ENCODE measurements at regions of chr17 and their contacts with region 1.

Region 1: DNA sequence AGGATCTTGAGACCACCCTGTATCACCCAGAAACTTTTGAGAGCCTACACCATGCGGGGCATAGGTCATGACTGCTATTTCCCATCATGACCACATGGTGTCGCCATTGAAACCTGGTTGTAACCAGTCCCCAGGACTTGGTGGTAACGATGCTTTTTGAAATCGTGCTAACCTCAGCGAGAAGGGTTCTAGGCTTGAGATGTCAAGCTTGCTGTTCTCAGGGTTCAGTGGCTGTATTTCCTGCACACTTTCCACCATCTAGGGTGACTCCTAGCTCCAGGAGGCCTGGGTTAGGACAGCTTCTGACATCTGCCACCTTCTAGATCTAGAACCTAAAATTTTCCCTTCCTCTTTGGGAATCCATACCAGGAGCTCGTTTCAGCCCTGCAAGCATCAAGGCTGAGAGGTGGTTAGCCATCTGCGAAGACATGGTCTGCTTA is 13.0 kb upstream of the SPNS3 start:
- DNase-seq: peak in 2 of 3 donors; percentile 35 to 62
- ATAC-seq: peak; percentile 88 to 92
- H3K4me3 ChIP-seq: no peak overlapping the region
- H3K27ac ChIP-seq: no peak overlapping the region
- H3K4me1 ChIP-seq: no peaks in the 10 kb centered on the region
- H3K27me3 ChIP-seq: no peaks in the 10 kb centered on the region

Region 2: DNA sequence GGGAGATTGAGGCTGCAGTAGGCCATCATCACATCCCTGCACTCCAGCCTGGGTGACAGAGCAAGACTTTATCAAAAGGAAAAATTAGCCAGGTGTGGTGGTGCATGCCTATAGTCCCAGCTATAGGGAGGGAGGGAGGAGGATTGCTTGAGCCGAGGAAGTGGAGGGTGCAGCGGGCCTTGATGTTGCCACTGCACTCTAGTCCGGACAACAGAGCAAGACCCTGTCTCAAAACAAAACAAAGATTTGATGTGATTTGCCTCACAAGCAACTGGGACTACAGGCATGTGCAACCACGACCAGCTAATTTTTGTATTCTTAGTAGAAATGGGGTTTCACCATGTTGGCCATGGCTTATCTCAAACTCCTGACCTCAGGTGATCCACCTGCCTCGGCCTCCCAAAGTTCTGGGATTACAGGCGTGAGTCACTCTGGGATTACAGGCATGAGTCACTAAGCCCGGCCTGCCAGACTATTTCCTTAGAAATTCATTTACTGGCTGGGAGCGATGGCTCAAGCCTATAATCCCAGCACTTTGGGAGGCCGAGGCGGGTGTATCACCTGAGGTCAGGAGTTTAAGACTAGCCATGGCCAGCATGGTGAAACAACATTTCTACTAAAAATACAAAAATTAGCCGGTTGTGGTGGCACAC is 65.7 kb before region 1 on chr17:
- intact Hi-C with region 1: no loop called
- DNase-seq: no peak
- ATAC-seq: no peak
- H3K4me3 ChIP-seq: no peak overlapping the region
- H3K27ac ChIP-seq: no peak overlapping the region
- H3K4me1 ChIP-seq: peaks cover 9% of the 10 kb centered on the region
- H3K27me3 ChIP-seq: no peaks in the 10 kb centered on the region

Region 3: GRCh38 chr17:4540224-4540641 is 119.5 kb after region 1 on chr17:
- intact Hi-C with region 1: loop called in 1 of 4 experiments (anchors 5 kb)
- DNase-seq: peak; percentile 21 to 64 (median 54)
- ATAC-seq: peak in 1 of 2 donors; percentile 1
- H3K4me3 ChIP-seq: no peak overlapping the region
- H3K27ac ChIP-seq: peak overlapping the region; percentile 23
- H3K4me1 ChIP-seq: peaks cover 16% of the 10 kb centered on the region
- H3K27me3 ChIP-seq: no peaks in the 10 kb centered on the region

Region 4: GRCh38 chr17:4554997-4555799 is 134.5 kb after region 1 on chr17 and contains the start of gene MYBBP1A:
- intact Hi-C with region 1: loop called in 3 of 4 experiments (anchors 5 to 10 kb)
- DNase-seq: peak; percentile 99
- ATAC-seq: peak; percentile 93
- H3K4me3 ChIP-seq: peak within 1 kb of the TSS; percentile 86
- H3K27ac ChIP-seq: peak within 1 kb of the TSS; percentile 71
- H3K4me1 ChIP-seq: peaks cover 4% of the 10 kb centered on the region
- H3K27me3 ChIP-seq: no peaks in the 10 kb centered on the region
- total RNA-seq, gene MYBBP1A: 18.4 to 28.5 (median 23.1) TPM

Region 5: GRCh38 chr17:4565209-4566141 is 144.8 kb after region 1 on chr17:
- intact Hi-C with region 1: loop called in 2 of 4 experiments (anchors 5 to 10 kb)
- DNase-seq: peak; percentile 66 to 84 (median 79)
- ATAC-seq: peak; percentile 80
- H3K4me3 ChIP-seq: no peak overlapping the region
- H3K27ac ChIP-seq: peak overlapping the region; percentile 25
- H3K4me1 ChIP-seq: peaks cover 1% of the 10 kb centered on the region
- H3K27me3 ChIP-seq: no peaks in the 10 kb centered on the region

Region 6: GRCh38 chr17:4625181-4625617 is 204.5 kb after region 1 on chr17:
- intact Hi-C with region 1: loop called in 2 of 4 experiments (anchors 5 to 10 kb)
- DNase-seq: no peak
- ATAC-seq: peak in 1 of 2 donors; percentile 69
- H3K4me3 ChIP-seq: no peak overlapping the region
- H3K27ac ChIP-seq: no peak overlapping the region
- H3K4me1 ChIP-seq: no peaks in the 10 kb centered on the region
- H3K27me3 ChIP-seq: no peaks in the 10 kb centered on the region